Heart right ventricle (tissue), 16 donors: ENCODE measurements at regions of chr4 and their contacts with region 1.

Region 1: DNA sequence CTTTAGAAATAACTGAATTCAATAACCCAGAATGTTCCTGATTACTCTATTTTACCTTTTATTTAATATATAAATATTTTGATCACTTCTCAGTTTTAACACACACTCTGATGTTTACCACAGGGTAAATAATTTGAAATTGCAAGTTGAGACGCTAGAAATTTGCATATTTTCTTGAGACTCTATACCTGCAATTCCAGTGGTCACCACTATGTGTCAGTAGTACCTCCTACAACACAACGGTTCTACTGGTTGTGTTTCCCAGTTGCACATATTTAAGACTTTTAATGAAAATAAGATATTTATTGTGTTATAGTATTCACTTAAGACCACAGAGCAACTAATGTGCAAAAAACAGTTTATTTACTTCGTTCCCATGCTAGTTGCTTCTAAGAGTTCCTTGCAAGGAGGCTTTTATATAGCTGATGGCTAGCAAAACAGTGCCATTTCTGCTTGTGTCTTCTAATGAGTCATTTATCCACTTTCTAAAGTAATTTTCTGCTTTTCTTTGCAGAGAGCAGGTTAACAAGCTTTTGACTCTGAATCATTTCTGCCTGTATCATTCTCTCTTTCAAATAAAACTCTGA is 98.9 kb upstream of the PDLIM3 start:
- DNase-seq: no peak
- ATAC-seq: no peak
- H3K4me3 ChIP-seq: no peak overlapping the region
- H3K27ac ChIP-seq: no peak overlapping the region
- H3K4me1 ChIP-seq: no peaks in the 10 kb centered on the region
- H3K27me3 ChIP-seq: peaks cover 0 to 17% (median 0%) of the 10 kb centered on the region in 7 donors
- CTCF ChIP-seq: peak; percentile 29 to 61 (median 51)

Region 2: DNA sequence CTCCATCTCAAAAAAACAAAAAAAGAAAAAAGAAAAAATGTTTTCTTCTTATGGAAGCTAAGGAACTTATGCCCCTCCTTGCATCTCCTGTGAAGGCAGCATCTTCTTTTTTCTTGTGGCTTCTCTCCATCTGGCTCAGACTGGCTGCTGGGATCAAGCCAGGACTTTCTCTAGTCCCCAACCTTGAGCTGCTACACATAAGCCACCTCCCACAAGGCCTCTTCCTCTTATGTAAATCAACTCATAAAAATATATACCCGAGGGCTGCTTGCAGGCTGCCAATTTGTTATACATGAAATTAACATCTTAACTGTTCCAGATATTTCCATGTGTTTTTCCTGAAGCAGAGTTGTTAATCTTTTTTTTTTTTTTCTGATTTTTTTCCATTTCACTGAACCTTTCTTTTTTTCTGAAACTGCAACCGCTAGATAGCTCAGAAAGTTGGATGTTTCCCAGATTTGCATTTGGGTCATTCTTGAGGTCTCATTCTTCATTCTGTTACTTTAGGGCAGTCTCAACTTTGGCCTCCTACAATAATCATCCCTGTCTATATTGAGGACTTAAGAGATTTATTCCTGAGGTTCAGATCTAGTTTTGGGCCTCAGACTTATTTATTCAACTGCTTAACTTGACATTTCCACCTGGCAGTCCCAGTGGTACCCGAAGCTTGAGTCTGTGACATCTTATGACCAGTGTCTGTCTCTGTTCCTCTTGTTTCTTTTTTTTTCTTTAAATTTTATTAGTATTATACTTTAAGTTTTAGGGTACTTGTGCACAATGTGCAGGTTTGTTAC is 414.4 kb before region 1 on chr4:
- intact Hi-C with region 1: no loop called
- DNase-seq: peak; percentile 25 to 58
- ATAC-seq: peak in 6 of 8 donors; percentile 47 to 64 (median 54)
- H3K4me3 ChIP-seq: no peak overlapping the region
- H3K27ac ChIP-seq: peak overlapping the region in 2 of 10 donors; percentile 25 to 36
- H3K4me1 ChIP-seq: peaks cover 0 to 41% (median 22%) of the 10 kb centered on the region in 9 donors
- H3K27me3 ChIP-seq: no peaks in the 10 kb centered on the region
- CTCF ChIP-seq: no peak

Region 3: DNA sequence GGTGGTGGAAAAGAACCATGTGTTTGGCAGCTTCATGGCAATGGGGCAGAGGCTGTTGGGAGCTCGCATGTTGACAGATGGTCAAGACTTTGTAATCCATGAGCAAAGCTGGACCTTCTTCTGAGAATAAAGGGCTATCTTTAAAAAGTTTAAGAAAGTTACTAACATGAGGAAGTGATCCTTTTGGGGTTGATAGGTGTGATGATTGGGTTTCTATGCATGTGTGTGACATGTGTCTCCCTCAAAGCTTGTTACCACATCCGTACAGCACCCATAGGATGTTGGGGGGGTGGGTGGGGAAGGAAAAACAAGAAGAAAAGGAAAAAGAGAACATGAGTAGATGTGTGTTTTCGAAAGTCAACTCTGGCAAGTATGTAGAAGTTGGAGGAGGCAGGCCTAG is 311.7 kb after region 1 on chr4:
- intact Hi-C with region 1: no loop called
- DNase-seq: no peak
- ATAC-seq: no peak
- H3K4me3 ChIP-seq: no peak overlapping the region
- H3K27ac ChIP-seq: no peak overlapping the region
- H3K4me1 ChIP-seq: no peaks in the 10 kb centered on the region
- H3K27me3 ChIP-seq: no peaks in the 10 kb centered on the region
- CTCF ChIP-seq: no peak

Region 4: GRCh38 chr4:186121057-186121456 is 486.9 kb after region 1 on chr4:
- intact Hi-C with region 1: loop called in 1 of 10 experiments (anchors 10 kb)
- DNase-seq: no peak
- ATAC-seq: no peak
- H3K4me3 ChIP-seq: no peak overlapping the region
- H3K27ac ChIP-seq: no peak overlapping the region
- H3K4me1 ChIP-seq: no peaks in the 10 kb centered on the region
- H3K27me3 ChIP-seq: peaks cover 0 to 16% (median 0%) of the 10 kb centered on the region in 7 donors
- CTCF ChIP-seq: no peak